Dorsolateral prefrontal cortex (tissue), 120 donors: ENCODE measurements at regions of chr17 and their contacts with region 1.

Region 1: DNA sequence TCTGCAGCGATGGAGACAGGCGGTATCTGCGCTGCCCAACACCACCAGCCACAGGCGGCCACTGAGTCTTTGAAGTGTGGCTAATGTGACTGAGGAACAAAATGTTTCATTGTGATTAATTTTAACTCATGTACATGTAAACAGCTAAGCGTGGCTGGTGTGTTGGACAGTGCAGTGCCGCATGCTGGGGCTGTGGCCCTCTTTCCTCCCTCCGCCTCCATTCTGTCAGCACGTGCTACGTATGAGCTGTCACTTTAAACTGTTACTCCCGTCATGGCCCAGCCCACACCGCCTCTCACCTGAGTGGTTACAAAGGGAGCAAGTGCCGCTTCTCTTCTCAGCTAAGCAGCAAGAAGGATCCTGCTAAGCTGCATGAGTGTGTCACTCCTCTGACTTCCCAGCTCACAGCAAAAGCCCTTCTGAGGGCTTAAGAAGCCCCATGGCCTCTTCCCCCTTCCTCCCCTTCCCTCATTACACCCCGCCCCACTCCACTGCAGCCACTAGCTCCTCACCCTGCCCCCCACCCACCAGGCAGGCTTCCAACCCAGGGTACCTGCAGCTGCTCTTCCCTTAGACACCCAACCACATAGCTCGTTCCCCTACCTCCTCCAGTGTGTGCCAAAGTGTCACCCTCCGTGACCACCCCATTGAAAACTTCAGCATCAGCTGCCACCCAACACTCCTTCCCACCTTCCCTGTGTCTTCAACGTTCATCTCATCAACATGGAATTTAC is 15.0 kb downstream of the HASPIN start:
- DNase-seq: peak; percentile 30 to 73 (median 66)
- H3K4me3 ChIP-seq: peak overlapping the region in 51 of 59 donors; percentile 8 to 66 (median 48)
- H3K27ac ChIP-seq: peak overlapping the region in 58 of 59 donors; percentile 24 to 94 (median 85)
- H3K27me3 ChIP-seq: no peaks in the 10 kb centered on the region
- CTCF ChIP-seq: peak in 1 of 56 donors; percentile 8

Region 2: DNA sequence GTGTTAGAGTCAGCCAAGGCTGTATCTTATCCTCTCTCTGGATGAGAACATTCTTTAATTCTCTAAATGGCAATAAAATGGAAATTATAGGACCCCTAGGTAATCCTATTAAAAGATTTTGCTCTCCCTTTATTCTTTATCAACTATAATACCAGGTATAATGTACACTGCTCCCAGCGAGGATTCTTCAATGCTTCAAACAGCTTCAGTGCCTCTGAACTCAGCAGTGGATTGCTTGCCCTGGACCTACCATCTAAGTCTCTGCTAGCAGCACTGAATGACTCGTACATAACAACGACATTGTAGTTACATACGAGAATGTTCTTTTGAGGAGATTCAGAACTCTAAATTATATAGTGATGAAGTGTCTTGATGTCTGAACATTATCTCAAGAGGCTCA is 348.9 kb before region 1 on chr17:
- intact Hi-C with region 1: no loop called
- DNase-seq: no peak
- H3K4me3 ChIP-seq: no peak overlapping the region
- H3K27ac ChIP-seq: no peak overlapping the region
- H3K27me3 ChIP-seq: peaks cover 0 to 27% (median 15%) of the 10 kb centered on the region in 45 donors
- CTCF ChIP-seq: no peak

Region 3: GRCh38 chr17:3802461-3803307 is 64.0 kb after region 1 on chr17:
- intact Hi-C with region 1: no loop called
- DNase-seq: no peak
- H3K4me3 ChIP-seq: no peak overlapping the region
- H3K27ac ChIP-seq: peak overlapping the region in 5 of 59 donors; percentile 21 to 41 (median 24)
- H3K27me3 ChIP-seq: no peaks in the 10 kb centered on the region
- CTCF ChIP-seq: no peak

Region 4: DNA sequence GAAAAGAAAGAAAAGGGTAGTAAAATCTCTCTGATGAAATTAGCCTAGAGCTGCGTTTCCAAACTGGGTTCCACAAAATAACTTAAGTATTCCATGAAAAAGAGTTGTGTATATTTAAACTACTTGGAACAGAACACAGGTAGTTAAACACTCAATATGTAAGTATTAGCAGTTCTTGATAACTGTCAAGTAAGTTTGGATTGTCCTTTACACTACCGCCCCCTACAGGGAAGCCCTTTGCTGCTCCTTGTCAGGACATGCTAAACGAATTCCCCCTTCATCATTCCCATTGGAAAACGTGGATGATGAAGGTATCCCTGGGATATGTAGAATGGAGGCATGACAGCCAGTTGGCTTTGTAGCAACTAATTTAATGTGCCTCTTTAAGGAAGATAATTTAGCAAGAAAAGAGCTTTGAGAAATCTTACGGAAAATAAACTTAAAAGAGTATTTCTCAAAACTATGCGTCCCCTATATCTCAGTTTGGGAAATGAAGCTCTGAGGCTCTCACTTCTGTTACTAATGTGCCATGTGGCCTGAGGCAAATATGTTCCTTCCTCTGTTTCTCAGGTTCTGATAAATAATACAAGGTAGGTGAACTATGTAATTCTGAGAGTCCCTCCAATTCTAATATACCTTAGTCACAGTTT is 88.5 kb after region 1 on chr17:
- intact Hi-C with region 1: loop called (anchors 1 to 5 kb)
- DNase-seq: peak in 7 of 10 donors; percentile 33 to 90 (median 58)
- H3K4me3 ChIP-seq: no peak overlapping the region
- H3K27ac ChIP-seq: peak overlapping the region in 26 of 59 donors; percentile 8 to 72 (median 45)
- H3K27me3 ChIP-seq: no peaks in the 10 kb centered on the region
- CTCF ChIP-seq: peak; percentile 36 to 93 (median 75)

Region 5: DNA sequence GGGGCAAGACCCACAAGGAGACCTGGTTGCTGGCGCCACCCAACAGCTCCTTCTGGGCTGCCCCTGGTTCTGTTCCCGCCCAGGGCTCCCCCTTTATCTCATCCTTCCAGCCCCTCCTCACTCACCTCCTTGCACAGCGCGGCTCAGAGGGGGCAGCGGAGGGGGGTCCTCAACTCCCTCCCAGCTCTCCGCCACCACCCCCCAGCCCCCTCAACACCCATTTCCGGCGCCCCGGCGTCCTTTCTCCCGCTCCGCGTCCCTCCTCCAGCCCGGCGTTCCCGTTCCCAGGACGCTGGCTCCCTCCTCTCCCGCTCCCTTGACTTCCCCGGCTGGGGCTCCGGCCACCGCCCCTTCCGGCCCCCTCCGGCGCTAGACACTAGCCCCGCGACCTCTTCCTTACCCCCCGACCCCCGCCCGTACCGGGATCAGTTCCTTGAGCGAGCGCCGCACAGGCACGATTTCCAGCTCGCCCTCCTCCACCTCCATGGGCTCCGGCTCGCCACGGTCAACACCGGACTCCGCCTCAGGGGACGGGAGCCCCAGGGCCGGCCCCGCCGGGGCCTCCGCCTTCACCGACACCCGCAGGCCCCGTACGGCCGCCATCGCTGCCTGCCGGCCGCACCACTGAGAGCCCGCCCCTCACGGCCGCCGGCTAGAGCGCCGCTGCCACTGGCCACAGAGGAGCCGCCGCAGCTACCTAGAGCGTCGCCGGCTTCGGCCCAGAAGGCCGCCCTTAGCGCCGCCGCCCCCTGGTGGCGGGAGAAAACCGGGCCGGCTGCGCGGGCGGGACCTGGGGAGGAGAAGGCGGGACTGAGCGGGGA is 107.1 kb after region 1 on chr17 and contains the start of gene NCBP3:
- intact Hi-C with region 1: loop called (anchors 5 kb)
- DNase-seq: peak; percentile 76 to 93 (median 88)
- H3K4me3 ChIP-seq: peak within 1 kb of the TSS; percentile 72 to 98 (median 92)
- H3K27ac ChIP-seq: peak within 1 kb of the TSS; percentile 54 to 97 (median 86)
- H3K27me3 ChIP-seq: no peaks in the 10 kb centered on the region
- CTCF ChIP-seq: peak; percentile 79 to 99 (median 94)
- total RNA-seq, gene NCBP3: 27.5 to 72.2 (median 39.5) TPM

Region 6: GRCh38 chr17:3913531-3914311 is 175.0 kb after region 1 on chr17:
- intact Hi-C with region 1: loop called in 1 of 2 experiments (anchors 5 kb)
- DNase-seq: peak; percentile 74 to 88 (median 84)
- H3K4me3 ChIP-seq: peak overlapping the region in 13 of 59 donors; percentile 6 to 30 (median 14)
- H3K27ac ChIP-seq: peak overlapping the region in 7 of 59 donors; percentile 19 to 66 (median 53)
- H3K27me3 ChIP-seq: no peaks in the 10 kb centered on the region
- CTCF ChIP-seq: peak; percentile 56 to 98 (median 94)

Region 7: GRCh38 chr17:3993493-3994220 is 254.9 kb after region 1 on chr17:
- intact Hi-C with region 1: no loop called
- DNase-seq: peak in 1 of 10 donors; percentile 10
- H3K4me3 ChIP-seq: no peak overlapping the region
- H3K27ac ChIP-seq: no peak overlapping the region
- H3K27me3 ChIP-seq: peaks cover 0 to 4% (median 0%) of the 10 kb centered on the region in 45 donors
- CTCF ChIP-seq: no peak

Region 8: GRCh38 chr17:4004517-4005295 is 266.0 kb after region 1 on chr17:
- intact Hi-C with region 1: loop called (anchors 5 kb)
- DNase-seq: peak in 2 of 10 donors; percentile 50 to 66
- H3K4me3 ChIP-seq: no peak overlapping the region
- H3K27ac ChIP-seq: peak overlapping the region in 15 of 59 donors; percentile 6 to 68 (median 29)
- H3K27me3 ChIP-seq: no peaks in the 10 kb centered on the region
- CTCF ChIP-seq: peak; percentile 62 to 96 (median 87)

Region 9: GRCh38 chr17:4074831-4075495 is 336.2 kb after region 1 on chr17:
- intact Hi-C with region 1: loop called in 1 of 2 experiments (anchors 10 kb)
- DNase-seq: no peak
- H3K4me3 ChIP-seq: no peak overlapping the region
- H3K27ac ChIP-seq: peak overlapping the region in 29 of 59 donors; percentile 5 to 76 (median 38)
- H3K27me3 ChIP-seq: no peaks in the 10 kb centered on the region
- CTCF ChIP-seq: peak in 55 of 56 donors; percentile 32 to 74 (median 64)